Left cardiac atrium (tissue), 4 donors: ENCODE measurements at regions of chr16 and their contacts with region 1.

Region 1: DNA sequence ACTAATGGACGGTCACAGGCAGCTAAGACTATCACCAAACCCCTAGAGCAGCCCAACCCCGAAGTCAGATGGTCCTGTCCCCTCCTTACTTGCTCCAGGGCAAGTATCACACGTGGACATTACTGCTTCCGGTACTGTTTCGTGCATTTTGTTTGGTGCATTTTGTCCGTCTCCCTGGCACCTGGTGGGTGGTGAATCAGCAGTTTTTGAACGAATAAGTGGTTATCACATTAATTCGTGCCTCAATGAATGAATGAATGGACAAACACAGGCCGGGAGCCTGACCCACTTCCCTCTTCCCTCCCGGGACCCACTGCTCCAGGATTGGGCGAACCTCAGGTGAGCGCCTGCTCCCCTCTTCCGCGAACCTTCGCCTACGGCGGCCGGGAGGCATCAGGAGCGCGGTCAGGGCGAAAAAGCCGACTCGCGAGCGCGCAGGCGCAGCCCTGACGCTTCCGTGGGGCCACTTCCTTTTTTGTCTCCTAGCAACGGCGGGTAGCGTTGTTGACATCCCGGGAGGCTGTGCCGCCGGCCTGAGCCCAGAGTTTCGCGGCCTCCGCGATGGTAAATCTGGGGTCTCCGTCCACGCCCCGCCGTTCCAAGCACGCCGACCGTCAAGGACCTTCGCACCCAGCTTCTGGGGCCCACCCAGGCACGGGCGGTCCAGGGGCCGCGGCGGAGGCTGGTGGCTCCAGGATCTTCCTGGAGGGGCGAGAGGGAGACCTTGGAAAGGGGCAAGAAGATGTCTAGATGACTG is at the start of gene DYNLRB2:
- DNase-seq: peak; percentile 95
- ATAC-seq: peak; percentile 97 to 99
- total RNA-seq, gene DYNLRB2: not detected

Region 2: DNA sequence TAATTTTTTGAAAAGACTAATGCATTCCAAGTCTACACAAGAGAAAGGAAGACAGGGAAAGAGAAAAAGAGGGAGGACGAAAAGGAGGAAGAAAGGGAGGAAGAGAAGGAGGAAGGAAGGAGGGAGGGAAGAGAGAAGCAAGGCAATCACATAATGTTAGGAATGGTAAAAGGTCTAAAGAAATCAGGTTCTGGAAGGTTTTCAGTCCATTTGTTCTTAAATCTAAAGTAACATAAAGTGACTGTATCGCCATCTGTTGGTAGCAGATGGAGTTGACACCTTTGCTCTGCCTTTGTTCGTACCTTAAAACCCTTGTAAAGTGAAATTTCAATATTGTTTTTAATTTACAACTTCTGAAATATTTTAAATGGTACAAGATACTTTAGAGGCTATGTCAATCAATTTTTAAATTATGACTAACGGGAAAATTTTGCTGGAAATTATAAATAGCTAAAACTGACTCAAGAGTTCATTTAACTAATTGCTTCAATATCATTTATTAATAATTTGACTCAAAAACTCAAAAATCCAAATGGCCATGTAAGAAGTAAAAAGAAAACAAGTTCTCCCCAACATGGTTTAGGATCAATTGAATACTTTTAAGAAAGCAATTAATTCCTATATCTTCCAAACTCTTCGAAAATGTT is 284.1 kb after region 1 on chr16:
- intact Hi-C with region 1: loop called in 1 of 2 experiments (anchors 10 kb)
- DNase-seq: no peak
- ATAC-seq: no peak